Right ventricle myocardium inferior (tissue), 1 donor: ENCODE measurements at regions of chr15 and their contacts with region 1.

Region 1: DNA sequence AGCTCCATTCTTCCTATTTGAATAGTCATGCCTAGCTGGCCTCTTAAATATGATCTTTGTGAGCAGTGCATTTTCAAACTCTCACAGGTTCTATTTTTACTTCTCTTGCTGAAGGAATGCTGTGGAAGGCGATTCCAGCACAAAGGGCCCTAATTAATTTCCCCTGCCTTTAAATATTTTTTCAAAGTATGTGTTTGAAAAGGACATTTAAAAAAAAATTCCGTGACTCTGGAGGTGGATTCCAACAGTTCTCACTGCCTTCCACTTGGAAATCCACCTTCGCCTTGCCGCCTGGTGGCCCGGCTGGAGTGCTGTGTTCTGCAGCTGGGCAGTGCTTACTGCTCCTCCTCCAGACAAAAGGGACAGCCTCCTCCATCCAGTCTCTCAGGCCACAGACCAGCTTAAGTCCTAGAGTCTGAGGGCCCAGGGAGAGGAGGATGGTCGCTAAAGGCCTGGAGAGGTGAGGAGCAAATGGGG is 61.5 kb upstream of the CORO2B start:
- DNase-seq: no peak
- ATAC-seq: peak; percentile 88

Region 2: GRCh38 chr15:68431792-68432401 is 85.4 kb before region 1 on chr15 and contains the start of gene ITGA11:
- intact Hi-C with region 1: loop called (anchors 5 kb)
- DNase-seq: peak; percentile 87
- ATAC-seq: peak; percentile 82
- total RNA-seq, gene ITGA11: 32.6 TPM

Region 3: DNA sequence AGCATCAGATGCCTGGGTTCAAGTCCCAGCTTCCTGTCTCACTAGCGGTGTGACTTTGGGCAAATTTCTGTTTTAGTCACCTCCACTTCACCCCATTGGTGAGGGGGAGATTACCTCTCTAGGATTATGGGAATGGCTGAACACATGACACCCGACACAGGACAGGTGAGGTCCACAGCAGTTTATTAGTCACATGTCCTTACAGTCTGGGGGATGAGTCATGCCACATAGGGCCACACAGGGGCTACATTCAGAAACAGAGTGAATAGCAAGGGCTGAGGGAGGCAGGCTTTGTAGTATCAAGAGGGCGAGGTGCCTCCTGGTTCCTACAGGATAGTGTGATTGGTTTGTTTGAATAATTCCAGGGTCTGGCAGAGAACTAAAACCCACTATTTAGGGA is 70.1 kb before region 1 on chr15:
- intact Hi-C with region 1: no loop called
- DNase-seq: no peak
- ATAC-seq: no peak

Region 4: DNA sequence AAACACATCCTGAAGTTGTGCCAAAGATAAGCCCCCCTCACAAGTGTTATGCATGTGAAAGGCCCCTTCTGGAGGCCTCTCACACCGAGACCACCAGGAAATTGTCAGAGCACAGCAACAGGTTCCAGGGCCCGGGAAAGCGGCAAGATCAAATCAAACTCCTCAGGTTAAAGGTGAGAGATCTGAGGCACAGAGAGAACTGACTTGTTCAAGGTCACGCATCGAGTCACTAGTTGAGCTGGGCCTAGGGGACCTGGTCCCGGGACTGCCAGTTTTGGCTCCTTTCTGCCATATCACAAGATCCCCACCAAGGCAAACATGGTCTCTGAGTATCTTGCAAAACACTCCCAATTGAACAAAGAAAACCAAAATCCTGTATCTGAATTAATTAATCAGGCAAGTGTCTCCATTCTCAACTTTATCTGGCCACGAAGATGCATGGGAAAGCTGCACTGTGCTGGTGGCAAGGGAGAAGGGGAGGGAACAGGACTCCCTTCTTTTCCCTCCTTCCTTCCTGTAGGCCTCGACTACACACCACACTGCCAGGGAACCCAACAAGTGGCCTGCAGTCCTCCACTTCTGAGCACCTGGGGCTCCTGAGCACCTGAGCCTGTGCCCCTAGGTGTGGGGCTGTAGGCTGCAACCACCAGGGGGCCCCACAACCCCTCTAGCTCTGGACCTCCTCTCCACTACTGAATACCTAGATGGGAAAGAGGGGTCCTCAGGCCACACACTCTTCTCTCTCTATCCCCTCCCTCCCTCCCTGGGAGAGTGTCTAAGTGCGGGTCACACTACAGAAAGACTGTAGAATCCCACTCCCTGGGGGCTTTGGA is 266.1 kb after region 1 on chr15:
- intact Hi-C with region 1: no loop called
- DNase-seq: peak; percentile 76
- ATAC-seq: no peak